Activated CD8-positive, alpha-beta T cell treated with anti-CD3 and anti-CD28 coated beads for 36 hours (primary cell): ENCODE measurements at regions of chr4 and their contacts with region 1.

Region 1: GRCh38 chr4:111854494-111855087 is 290.7 kb upstream of the FAM241A start:
- DNase-seq: peak; percentile 24
- ATAC-seq: no peak
- H3K4me3 Mint-ChIP-seq: no peak overlapping the region
- H3K27ac Mint-ChIP-seq: no peak overlapping the region
- H3K4me1 Mint-ChIP-seq: no peaks in the 10 kb centered on the region
- H3K27me3 Mint-ChIP-seq: no peaks in the 10 kb centered on the region
- CTCF ChIP-seq: peak; percentile 48

Region 2: DNA sequence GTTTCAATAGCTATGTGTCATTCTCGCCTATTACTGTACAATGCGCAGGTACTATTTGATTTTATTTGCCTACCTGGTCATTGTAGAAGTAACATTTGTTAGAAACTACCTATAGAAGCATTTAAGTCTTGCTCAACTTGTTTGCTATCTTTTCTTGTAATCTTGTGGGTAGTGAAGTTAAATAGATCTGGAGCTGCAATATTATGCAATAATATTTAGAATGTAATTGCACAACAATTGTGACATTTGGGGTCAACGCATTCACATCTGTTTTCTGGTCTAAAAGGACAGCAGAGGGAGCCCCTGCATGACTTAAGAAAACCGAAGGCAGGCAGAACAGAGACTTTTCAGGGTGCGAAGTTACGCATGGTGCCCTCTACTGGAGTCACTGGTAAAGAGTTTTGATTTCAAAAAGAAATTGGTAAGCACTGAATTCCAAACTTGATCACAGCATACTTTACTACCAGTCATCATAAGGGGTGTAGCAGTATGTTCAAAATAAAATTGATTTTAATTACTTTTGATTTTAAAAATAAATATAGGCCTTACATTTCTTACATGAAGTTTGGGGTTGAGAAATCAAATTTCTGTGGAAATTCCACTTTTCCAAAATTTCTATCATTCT is 212.5 kb before region 1 on chr4:
- CTCF ChIA-PET with region 1: interaction called, 4 read pairs
- POLR2A ChIA-PET with region 1: no interaction called
- intact Hi-C with region 1: loop called (anchors 10 kb)
- DNase-seq: peak; percentile 62
- ATAC-seq: peak; percentile 53
- H3K4me3 Mint-ChIP-seq: no peak overlapping the region
- H3K27ac Mint-ChIP-seq: no peak overlapping the region
- H3K4me1 Mint-ChIP-seq: no peaks in the 10 kb centered on the region
- H3K27me3 Mint-ChIP-seq: no peaks in the 10 kb centered on the region
- CTCF ChIP-seq: peak; percentile 57

Region 3: GRCh38 chr4:112370466-112370865 is 515.9 kb after region 1 on chr4:
- CTCF ChIA-PET with region 1: no interaction called
- POLR2A ChIA-PET with region 1: no interaction called
- intact Hi-C with region 1: no loop called
- DNase-seq: no peak
- ATAC-seq: no peak
- H3K4me3 Mint-ChIP-seq: no peak overlapping the region
- H3K27ac Mint-ChIP-seq: no peak overlapping the region
- H3K4me1 Mint-ChIP-seq: no peaks in the 10 kb centered on the region
- H3K27me3 Mint-ChIP-seq: no peaks in the 10 kb centered on the region
- CTCF ChIP-seq: no peak